WTC11 (cell line): ENCODE measurements at regions of chr17 and their contacts with region 1.

Region 1: GRCh38 chr17:60151355-60152065 is 1.7 kb downstream of the CA4 start:
- DNase-seq: no peak
- ATAC-seq: peak; percentile 4; the same call in 1 of the 2 replicates
- H3K4me3 Mint-ChIP-seq: peak overlapping the region; percentile 75
- H3K27ac Mint-ChIP-seq: no peak overlapping the region
- H3K4me1 Mint-ChIP-seq: peaks cover 33% of the 10 kb centered on the region
- H3K27me3 Mint-ChIP-seq: peaks cover 50% of the 10 kb centered on the region
- CTCF ChIP-seq: no peak

Region 2: GRCh38 chr17:60127068-60128054 is 24.1 kb before region 1 on chr17:
- CTCF ChIA-PET with region 1: no interaction called
- POLR2A ChIA-PET with region 1: no interaction called
- DNase-seq: no peak
- ATAC-seq: no peak
- H3K4me3 Mint-ChIP-seq: no peak overlapping the region
- H3K27ac Mint-ChIP-seq: no peak overlapping the region
- H3K4me1 Mint-ChIP-seq: peaks cover 9% of the 10 kb centered on the region
- H3K27me3 Mint-ChIP-seq: peaks cover 15% of the 10 kb centered on the region
- CTCF ChIP-seq: no peak

Region 3: DNA sequence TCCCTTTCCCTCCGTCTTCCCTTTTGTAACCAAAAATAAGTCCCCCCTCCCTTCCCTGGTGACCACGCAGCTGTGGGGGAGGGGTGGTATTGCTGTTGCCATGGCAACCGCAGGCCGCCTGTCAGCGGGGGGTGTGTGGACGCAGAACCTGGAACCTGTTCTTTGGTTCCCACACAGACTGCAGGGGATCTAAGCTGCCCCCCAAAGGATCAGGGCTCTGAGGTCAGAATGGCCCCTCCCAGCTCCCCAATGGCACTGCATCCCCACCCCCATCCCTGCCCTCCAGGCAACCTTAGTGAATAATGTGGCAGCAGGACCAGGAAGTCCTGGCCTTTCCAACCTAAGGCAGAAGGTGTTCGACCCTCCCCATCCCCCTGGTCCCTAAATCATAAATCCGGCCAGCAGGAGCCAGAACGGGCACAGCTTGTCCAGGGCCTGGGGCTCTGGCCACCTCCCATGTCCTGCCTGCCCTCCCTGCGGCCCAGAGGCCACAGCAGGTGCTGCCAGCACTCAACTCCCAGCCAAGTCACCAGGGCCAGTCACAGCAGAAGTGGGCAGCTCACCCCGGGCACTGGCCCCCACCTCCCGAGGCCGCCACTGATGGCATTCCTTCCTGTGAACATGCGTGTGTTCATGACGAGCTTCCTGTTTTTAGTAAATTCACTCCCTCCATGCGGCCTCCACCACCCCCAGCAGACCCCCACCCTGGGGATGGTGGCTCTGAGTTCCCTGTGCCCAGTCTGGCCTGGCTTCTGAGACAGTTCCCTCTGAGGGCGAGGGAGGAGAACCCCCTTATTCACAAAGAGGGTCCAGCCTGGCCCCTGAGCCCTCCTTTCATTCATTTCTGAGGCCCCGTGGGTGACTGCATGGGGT is 10.4 kb after region 1 on chr17:
- CTCF ChIA-PET with region 1: interaction called, 18 read pairs
- POLR2A ChIA-PET with region 1: no interaction called
- DNase-seq: peak; percentile 67
- ATAC-seq: no peak
- H3K4me3 Mint-ChIP-seq: peak overlapping the region; percentile 47
- H3K27ac Mint-ChIP-seq: no peak overlapping the region
- H3K4me1 Mint-ChIP-seq: peaks cover 65% of the 10 kb centered on the region
- H3K27me3 Mint-ChIP-seq: no peaks in the 10 kb centered on the region
- CTCF ChIP-seq: no peak